ENCODE measurements at regions of chr17 and their contacts with region 1.

Region 1: DNA sequence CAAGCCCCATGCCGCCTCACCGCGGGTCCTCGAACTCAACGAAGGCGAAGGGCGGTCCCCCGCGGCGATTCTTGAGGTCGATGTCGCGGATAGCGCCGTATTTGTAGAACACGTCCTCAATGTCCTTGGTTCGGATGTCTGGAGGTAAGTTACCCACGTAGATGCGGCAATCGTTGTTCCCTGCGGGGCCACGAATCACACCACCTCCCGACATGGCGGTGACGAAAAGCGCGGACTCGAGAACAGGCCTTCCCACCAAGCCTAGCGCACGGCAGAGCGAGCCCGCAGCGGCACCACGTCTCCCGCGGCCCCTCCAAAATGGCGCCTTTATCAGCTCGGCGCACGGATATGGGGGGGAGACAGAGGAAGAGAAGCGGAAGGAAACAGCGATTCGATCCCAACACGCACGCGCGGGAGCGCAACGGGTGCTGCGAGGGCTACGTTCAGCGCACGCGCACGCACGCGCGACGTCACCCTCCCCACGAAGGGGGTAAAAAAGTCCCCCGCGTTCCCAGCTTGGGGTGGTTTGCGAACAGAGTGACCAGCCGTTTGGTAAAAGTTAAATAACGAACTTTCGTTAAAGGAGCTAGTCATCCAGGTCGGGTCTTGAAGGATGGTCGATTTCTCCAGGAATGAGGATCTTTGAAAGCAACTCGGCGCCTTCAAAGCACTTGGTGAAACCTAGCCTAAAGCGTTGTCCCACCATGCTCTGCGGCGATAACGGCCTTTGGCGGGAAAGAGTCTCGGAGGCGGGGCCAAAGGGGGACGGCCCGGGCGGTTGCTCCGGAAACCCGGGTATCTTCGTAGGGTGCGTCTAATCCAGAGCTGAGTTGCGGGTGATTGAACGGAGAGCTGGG is at the start of gene SRSF1:
- DNase-seq: peak; percentile 87 to 95
- H3K4me3 ChIP-seq: peak within 1 kb of the TSS; percentile 87 to 98 (median 94)
- H3K27ac ChIP-seq: peak within 1 kb of the TSS; percentile 100
- H3K4me1 ChIP-seq: peaks cover 0 to 11% (median 5%) of the 10 kb centered on the region in 4 experiments; a peak in 4 of 7 replicates
- H3K27me3 ChIP-seq: no peaks in the 10 kb centered on the region
- CTCF ChIP-seq: no peak
- EP300 ChIP-seq: peak; percentile 20 to 38; a peak in 1 of 3 replicates
- POLR2A ChIP-seq: peak; percentile 85 to 92
- RAD21 ChIP-seq: no peak; a peak in 1 of 4 replicates
- total RNA-seq, gene SRSF1: 429 and 433 TPM in 2 replicates

Region 2: GRCh38 chr17:57955183-57955931 is 51.8 kb before region 1 on chr17 and contains the start of gene CUEDC1:
- CTCF ChIA-PET with region 1: no interaction called
- POLR2A ChIA-PET with region 1: interaction called, 12 read pairs
- DNase-seq: peak in 1 of 2 experiments; percentile 82
- H3K4me3 ChIP-seq: peak within 1 kb of the TSS; percentile 32 to 86 (median 66)
- H3K27ac ChIP-seq: no peak within 1 kb of the TSS
- H3K4me1 ChIP-seq: peaks cover 12 to 23% (median 14%) of the 10 kb centered on the region in 4 experiments
- H3K27me3 ChIP-seq: peaks cover 0 to 30% (median 20%) of the 10 kb centered on the region in 4 experiments; a peak in 6 of 7 replicates
- CTCF ChIP-seq: peak; percentile 16 to 63 (median 37)
- EP300 ChIP-seq: no peak
- POLR2A ChIP-seq: no peak
- RAD21 ChIP-seq: peak in 1 of 2 experiments; percentile 23; a peak in 2 of 4 replicates
- total RNA-seq, gene CUEDC1: 7.8 and 10.7 TPM in 2 replicates

Region 3: DNA sequence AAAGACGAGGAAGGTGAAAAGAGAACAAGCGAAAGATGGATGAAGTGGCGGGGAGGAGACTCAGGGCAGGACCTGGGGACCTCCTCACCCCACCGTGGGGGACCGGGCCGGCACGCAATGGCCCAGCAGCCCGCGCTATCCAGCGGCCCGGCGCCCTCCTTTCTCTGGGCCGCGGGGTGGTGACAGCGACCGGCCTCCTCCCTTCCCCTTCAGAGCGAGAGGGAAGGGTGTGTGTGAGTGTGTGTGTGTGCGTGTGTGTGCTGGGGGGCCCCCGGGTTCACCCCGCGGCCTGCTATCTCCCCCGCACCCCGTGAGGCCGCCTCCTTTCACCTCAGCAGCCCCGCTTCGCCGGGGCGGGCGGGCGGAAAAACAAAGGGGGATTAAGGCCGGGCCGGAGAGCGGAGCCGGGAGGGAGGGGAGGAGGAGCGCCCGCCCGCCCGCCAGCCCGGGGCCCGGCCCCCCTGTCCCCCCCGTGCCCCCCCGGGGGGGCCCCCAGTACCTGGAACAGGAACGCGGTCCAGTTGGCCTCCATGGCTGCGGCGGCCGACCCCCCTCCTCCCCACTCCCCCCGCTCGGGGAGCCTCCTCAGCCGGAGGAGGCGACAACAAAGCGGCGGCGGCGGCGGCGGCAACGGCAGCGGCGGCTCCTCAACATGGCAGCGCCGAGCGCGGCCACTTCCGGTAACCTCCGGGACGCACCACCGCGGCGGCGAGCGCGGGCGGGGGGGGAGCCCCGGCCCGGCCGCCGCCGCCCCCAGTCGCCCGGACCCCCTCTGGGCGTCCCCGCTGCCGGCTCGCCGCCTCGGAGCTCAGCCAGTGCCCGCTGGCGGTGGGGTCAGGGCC is 19.4 kb before region 1 on chr17 and contains the start of gene VEZF1:
- CTCF ChIA-PET with region 1: interaction called, 3 read pairs
- POLR2A ChIA-PET with region 1: interaction called, 246 read pairs
- DNase-seq: peak in 1 of 2 experiments; percentile 83
- H3K4me3 ChIP-seq: peak within 1 kb of the TSS; percentile 73 to 95 (median 86)
- H3K27ac ChIP-seq: peak within 1 kb of the TSS; percentile 89
- H3K4me1 ChIP-seq: peaks cover 0 to 2% (median 0%) of the 10 kb centered on the region in 4 experiments; a peak in 3 of 7 replicates
- H3K27me3 ChIP-seq: no peaks in the 10 kb centered on the region
- CTCF ChIP-seq: no peak
- EP300 ChIP-seq: 0 out of 3 replicates have a peak, but pooled peaks of 1 of the 2 experiments have one; percentile 22
- POLR2A ChIP-seq: no peak; a peak in 1 of 3 replicates
- RAD21 ChIP-seq: no peak
- total RNA-seq, gene VEZF1: 56.7 and 61.9 TPM in 2 replicates

Region 4: DNA sequence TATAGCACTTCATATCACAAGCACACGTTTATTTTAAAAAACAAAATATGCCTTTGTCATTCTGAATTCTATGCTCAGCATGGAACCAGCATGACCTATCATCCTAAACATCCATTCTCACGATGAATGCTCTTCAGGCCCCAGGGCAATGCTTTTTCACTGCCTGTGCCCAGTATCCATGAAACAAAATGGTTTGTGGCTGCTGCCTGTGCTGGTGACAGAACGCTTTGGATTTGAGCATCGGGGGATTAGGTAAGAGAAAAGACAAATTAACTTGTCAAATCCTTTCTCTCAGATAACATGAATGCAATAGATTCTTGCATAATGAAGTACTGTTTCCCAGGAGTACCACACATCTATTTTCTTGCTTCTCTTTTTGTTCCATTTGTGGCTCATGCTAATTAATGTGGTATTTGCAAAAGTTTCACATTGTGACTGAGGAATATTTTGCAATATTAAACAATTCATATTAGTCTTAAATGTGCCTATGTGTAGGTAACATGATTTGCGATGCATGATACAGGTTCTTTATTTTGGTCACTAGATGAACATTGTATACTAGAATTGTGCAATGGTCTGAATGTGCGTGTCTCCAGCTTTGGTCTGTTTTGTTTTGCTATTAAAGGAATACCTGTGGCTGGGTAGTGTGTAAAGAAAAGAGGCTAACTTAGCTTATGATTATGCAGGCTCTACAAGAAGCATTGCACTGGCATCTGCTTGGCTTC is 25.7 kb after region 1 on chr17:
- CTCF ChIA-PET with region 1: interaction called, 3 read pairs
- POLR2A ChIA-PET with region 1: interaction called, 31 read pairs
- DNase-seq: peak in 1 of 2 experiments; percentile 27
- H3K4me3 ChIP-seq: no peak overlapping the region
- H3K27ac ChIP-seq: no peak overlapping the region
- H3K4me1 ChIP-seq: peaks cover 0 to 9% (median 2%) of the 10 kb centered on the region in 4 experiments; a peak in 2 of 7 replicates
- H3K27me3 ChIP-seq: no peaks in the 10 kb centered on the region
- CTCF ChIP-seq: no peak
- EP300 ChIP-seq: no peak
- POLR2A ChIP-seq: no peak
- RAD21 ChIP-seq: no peak

Region 5: DNA sequence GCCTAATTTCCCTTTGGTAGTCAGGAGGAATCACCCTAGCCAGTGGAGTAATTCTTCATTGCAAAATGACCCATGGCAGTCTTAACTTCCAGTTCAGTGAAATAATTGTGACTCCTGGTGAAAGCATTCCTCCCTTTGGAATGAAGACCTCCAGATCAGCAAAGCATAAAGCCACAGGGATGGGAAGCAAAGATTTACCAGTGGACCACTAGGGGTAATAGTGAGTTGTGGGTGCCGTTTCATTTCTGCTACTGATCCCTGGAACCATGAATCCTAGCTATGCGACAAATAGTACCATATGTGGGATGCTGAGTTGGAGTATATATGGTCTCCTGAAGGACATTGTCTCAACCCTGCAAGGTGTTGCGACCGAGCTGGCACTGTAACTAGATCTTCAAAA is 89.7 kb after region 1 on chr17:
- CTCF ChIA-PET with region 1: interaction called, 5 read pairs
- POLR2A ChIA-PET with region 1: interaction called, 12 read pairs
- DNase-seq: peak in 1 of 2 experiments; percentile 14
- H3K4me3 ChIP-seq: no peak overlapping the region
- H3K27ac ChIP-seq: no peak overlapping the region
- H3K4me1 ChIP-seq: no peaks in the 10 kb centered on the region
- H3K27me3 ChIP-seq: no peaks in the 10 kb centered on the region
- CTCF ChIP-seq: peak in 2 of 3 experiments; percentile 16 to 62; a peak in 2 of 4 replicates
- EP300 ChIP-seq: no peak
- POLR2A ChIP-seq: no peak
- RAD21 ChIP-seq: no peak; a peak in 1 of 4 replicates

Region 6: DNA sequence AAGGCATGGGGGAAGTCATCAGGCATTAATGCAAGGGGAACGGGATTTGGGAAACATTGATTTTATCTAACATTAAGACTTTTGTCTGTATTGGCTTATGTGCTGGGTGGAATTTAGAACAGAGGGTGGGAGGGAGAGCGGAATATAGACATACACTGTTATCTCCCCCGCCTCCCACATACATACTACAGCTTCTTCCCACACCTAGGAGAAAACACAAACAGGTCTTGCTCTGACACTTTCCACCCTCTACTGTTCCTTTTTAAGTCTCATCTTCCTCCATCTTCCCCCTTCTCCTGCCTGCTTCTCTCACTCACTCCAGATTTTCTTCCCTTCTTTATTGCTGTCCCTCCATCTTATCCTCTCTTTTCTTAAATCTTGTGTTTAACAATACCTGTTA is 141.5 kb after region 1 on chr17:
- CTCF ChIA-PET with region 1: no interaction called
- POLR2A ChIA-PET with region 1: no interaction called
- DNase-seq: no peak
- H3K4me3 ChIP-seq: no peak overlapping the region
- H3K27ac ChIP-seq: no peak overlapping the region
- H3K4me1 ChIP-seq: no peaks in the 10 kb centered on the region; a peak in 1 of 7 replicates
- H3K27me3 ChIP-seq: no peaks in the 10 kb centered on the region; a peak in 1 of 7 replicates
- CTCF ChIP-seq: no peak
- EP300 ChIP-seq: no peak
- POLR2A ChIP-seq: no peak
- RAD21 ChIP-seq: no peak

Region 7: DNA sequence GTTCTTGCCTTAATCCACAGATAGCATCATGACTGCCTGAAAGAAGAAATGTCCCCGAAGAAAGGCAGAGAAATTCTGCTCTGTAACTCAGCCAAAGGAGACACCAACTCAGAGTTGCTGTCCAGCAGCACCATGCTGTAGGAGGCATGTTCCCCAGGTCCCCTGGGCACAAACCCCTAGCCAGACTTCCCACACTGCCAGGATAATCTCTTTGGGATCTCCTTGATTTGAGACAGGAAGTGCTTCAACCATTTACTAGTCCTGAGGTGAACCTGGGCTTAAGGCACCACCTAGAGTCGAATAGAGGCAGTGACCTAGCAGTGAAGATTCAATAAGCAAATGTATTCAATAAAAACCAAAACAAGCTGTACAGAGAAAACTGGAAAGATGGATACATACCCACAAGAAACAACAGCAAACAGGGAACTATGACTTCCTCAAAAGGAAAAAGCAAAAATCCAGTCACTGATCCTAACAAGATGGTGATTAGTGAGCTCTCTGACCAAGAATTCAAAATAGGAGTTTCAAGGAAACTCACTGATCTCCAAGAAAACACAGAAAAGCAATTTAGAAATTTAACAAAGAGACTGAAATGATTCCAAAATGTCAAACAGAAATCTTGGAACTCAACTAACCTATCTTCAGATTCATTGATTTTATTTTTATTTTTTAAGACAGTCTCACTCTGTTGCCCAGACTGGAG is 165.4 kb after region 1 on chr17:
- CTCF ChIA-PET with region 1: no interaction called
- POLR2A ChIA-PET with region 1: no interaction called
- DNase-seq: no peak
- H3K4me3 ChIP-seq: no peak overlapping the region
- H3K27ac ChIP-seq: no peak overlapping the region
- H3K4me1 ChIP-seq: no peaks in the 10 kb centered on the region
- H3K27me3 ChIP-seq: peaks cover 0 to 3% (median 2%) of the 10 kb centered on the region in 4 experiments; a peak in 1 of 7 replicates
- CTCF ChIP-seq: peak in 2 of 3 experiments; percentile 73 to 77; a peak in 3 of 4 replicates
- EP300 ChIP-seq: no peak
- POLR2A ChIP-seq: no peak
- RAD21 ChIP-seq: peak; percentile 87 to 92